ENCODE measurements at regions of chr11 and their contacts with region 1.

Region 1: GRCh38 chr11:94504689-94505293 is 7.5 kb upstream of the C11orf97 start:
- DNase-seq: no peak
- H3K4me3 ChIP-seq: no peak overlapping the region
- H3K27ac ChIP-seq: no peak overlapping the region
- H3K4me1 ChIP-seq: no peaks in the 10 kb centered on the region
- H3K27me3 ChIP-seq: no peaks in the 10 kb centered on the region
- CTCF ChIP-seq: peak; percentile 40 to 68 (median 46)
- POLR2A ChIP-seq: no peak

Region 2: DNA sequence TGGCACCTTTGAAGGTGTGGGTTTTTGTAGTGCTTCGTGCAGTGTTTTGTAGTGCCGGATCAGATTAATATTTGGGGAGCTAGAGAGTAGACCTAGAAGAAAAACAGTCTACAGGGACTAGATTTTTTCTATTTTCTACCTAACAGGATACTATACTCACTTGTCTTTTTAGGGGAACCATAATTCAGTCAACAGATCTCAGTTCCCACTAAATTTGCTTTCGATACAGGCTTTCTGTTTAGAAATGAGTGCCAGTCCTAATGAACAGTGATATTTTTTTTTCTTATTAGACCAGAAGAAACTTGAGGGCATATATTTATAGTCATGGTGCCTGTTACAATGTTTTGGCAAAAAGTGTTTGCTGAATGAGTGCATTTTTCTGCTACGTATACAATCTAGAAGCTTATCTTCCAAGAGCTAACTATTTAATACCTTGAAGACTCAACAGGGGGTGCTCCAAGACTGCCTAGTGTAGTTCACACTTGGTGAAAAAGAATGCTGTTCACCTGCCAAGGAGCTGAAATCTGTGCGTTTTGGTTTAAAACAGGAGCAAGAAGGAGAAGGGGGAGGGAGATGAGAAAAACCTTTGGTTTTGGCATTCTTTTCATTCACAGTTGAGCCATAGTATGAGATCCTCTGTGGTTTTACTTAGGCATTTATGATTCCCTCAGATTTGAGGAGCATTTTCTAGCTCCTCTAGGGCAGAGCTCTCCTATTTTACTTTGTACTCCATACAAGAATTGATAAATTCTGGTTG is 609.5 kb before region 1 on chr11:
- intact Hi-C with region 1: loop called (anchors 10 kb)
- DNase-seq: no peak
- H3K4me3 ChIP-seq: no peak overlapping the region
- H3K27ac ChIP-seq: no peak overlapping the region
- H3K4me1 ChIP-seq: no peaks in the 10 kb centered on the region
- H3K27me3 ChIP-seq: no peaks in the 10 kb centered on the region
- CTCF ChIP-seq: peak; percentile 57 to 65 (median 61)
- POLR2A ChIP-seq: no peak

Measured in uterus (tissue), 4 donors.